Body of pancreas (tissue), 4 donors: ENCODE measurements at regions of chr1 and their contacts with region 1.

Region 1: DNA sequence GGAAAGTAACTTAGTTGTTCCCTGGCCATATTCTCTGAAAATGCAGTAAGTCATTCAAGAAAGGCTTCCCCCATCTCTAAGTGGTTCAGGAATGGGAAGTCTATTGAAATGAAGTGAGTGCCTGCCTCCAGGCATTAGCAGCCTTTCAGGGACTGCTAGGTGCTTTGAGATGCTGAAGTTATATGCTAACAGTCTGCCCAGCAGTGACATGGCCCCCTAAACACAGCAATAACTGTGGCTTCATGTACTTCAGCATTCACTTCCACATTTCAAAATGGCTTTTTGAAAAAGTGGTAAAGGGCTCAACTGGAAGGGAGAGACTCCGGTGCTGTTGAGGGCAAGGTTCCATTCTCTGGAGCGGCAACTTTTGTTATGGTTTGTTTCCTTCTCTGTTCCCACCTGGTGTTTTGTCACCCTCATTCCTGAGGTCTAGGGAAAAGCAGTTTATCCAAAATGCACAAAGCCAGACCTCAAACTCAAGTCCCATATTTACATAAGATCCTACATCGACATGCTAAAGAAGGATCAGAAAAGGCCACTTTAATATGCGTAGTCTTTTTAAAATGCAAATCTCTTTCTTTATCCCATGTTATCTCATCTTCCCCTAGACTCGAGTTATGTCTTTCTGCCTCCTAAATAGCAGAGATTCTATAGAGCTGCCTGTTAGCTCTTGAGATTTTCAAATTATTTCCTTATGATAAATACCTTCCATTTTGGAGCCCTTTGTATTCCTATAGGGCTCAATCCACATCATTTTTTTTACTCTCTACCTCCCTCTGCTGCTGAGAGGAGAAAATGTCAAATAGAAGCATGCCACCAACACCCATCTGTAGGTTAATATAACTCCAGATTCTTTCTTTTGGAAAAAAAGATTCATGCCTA is 34.2 kb upstream of the LRRC8C start:
- DNase-seq: no peak
- ATAC-seq: peak; percentile 87
- H3K4me3 ChIP-seq: no peak overlapping the region
- H3K27ac ChIP-seq: no peak overlapping the region
- H3K4me1 ChIP-seq: no peaks in the 10 kb centered on the region
- H3K27me3 ChIP-seq: no peaks in the 10 kb centered on the region
- CTCF ChIP-seq: peak in 6 of 7 experiments; percentile 51 to 82 (median 73)
- POLR2A ChIP-seq: no peak

Region 2: DNA sequence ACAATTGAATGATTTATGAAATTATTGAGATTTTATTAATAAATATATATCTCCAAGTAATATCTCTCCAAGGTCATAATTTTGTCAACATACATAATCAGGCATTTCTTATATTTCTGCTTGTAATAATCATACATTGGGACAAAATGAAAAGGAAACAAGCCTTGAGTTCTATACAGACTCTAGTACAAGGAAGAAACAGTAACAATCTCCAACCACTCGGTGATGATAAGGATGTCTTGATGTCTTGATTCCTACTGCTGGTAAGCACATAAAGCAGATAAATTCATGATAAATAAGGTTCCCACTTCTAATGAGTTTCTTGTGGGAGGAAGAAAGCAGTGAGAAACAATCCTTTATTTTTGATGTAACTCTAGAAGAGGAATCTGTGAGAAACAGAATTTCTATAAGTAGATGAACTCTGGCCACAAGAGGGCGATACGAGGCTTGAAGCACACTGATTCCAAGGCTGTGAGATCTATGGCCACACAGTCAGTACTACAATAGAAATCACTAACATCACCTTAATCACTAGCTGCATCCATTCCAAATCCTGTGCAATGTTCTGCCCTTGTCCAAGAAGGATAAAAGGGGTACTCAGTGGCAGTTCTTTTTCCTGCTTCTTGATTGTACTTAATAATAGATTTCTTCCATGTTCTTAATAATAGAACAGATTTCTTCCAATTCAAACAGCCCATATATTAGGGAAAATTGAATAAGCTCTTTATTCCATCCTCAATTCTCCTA is 115.5 kb before region 1 on chr1:
- intact Hi-C with region 1: loop called (anchors 10 kb)
- DNase-seq: peak; percentile 71 to 87 (median 82)
- ATAC-seq: peak; percentile 77
- H3K4me3 ChIP-seq: no peak overlapping the region
- H3K27ac ChIP-seq: no peak overlapping the region
- H3K4me1 ChIP-seq: no peaks in the 10 kb centered on the region
- H3K27me3 ChIP-seq: no peaks in the 10 kb centered on the region
- CTCF ChIP-seq: peak; percentile 56 to 78 (median 69)
- POLR2A ChIP-seq: no peak